Heart right ventricle (tissue), 16 donors: ENCODE measurements at regions of chr5 and their contacts with region 1.

Region 1: GRCh38 chr5:160129841-160130240 is 10.6 kb upstream of the PWWP2A start:
- DNase-seq: no peak
- ATAC-seq: no peak
- H3K4me3 ChIP-seq: no peak overlapping the region
- H3K27ac ChIP-seq: no peak overlapping the region
- H3K4me1 ChIP-seq: peaks cover 0 to 18% (median 5%) of the 10 kb centered on the region in 9 donors
- H3K27me3 ChIP-seq: no peaks in the 10 kb centered on the region
- CTCF ChIP-seq: no peak

Region 2: GRCh38 chr5:160075073-160075472 is 54.8 kb before region 1 on chr5:
- intact Hi-C with region 1: loop called in 1 of 10 experiments (anchors 5 kb)
- DNase-seq: no peak
- ATAC-seq: no peak
- H3K4me3 ChIP-seq: no peak overlapping the region
- H3K27ac ChIP-seq: no peak overlapping the region
- H3K4me1 ChIP-seq: peaks cover 0 to 20% (median 14%) of the 10 kb centered on the region in 9 donors
- H3K27me3 ChIP-seq: no peaks in the 10 kb centered on the region
- CTCF ChIP-seq: no peak